CD4-positive, alpha-beta T cell (primary cell): ENCODE measurements at regions of chr15 and their contacts with region 1.

Region 1: DNA sequence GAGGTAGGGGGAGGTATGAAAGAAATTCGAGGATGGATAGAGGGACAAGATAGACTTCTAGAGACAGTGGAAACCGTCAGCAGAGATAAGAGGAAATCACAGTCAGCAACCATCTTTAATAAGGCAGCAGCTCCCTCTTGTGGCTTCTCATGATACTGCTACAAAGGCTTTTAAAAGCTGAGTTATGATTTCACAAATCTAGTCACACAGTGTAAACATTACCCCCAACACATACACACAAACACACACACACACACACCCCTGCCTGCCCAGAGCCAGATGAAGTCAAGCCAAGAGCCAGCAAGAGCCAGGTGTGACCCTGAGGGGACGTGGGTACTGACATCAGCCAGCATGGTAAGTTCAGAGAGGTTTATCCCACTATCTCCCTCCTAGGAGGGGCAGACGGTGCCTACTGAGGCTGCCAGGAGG is 18.9 kb upstream of the TGM5 start:
- DNase-seq: peak in 13 of 14 experiments; percentile 24 to 80 (median 47)
- ATAC-seq: peak; percentile 77
- H3K4me3 ChIP-seq: no peak overlapping the region
- H3K4me3 Mint-ChIP-seq: no peak overlapping the region
- H3K27ac ChIP-seq: no peak overlapping the region
- H3K27ac Mint-ChIP-seq: no peak overlapping the region
- H3K4me1 ChIP-seq: no peaks in the 10 kb centered on the region
- H3K4me1 Mint-ChIP-seq: peaks cover 4% of the 10 kb centered on the region
- H3K27me3 ChIP-seq: no peaks in the 10 kb centered on the region
- H3K27me3 Mint-ChIP-seq: peaks cover 15% of the 10 kb centered on the region
- CTCF ChIP-seq: peak; percentile 74

Region 2: GRCh38 chr15:43225201-43225949 is 60.2 kb before region 1 on chr15:
- CTCF ChIA-PET with region 1: interaction called, 28 read pairs
- POLR2A ChIA-PET with region 1: interaction called, 3 read pairs
- intact Hi-C with region 1: loop called (anchors 1 kb)
- DNase-seq: peak in 12 of 14 experiments; percentile 5 to 76 (median 24)
- ATAC-seq: peak; percentile 79
- H3K4me3 ChIP-seq: no peak overlapping the region
- H3K4me3 Mint-ChIP-seq: no peak overlapping the region
- H3K27ac ChIP-seq: no peak overlapping the region
- H3K27ac Mint-ChIP-seq: no peak overlapping the region
- H3K4me1 ChIP-seq: peaks cover 3% of the 10 kb centered on the region
- H3K4me1 Mint-ChIP-seq: peaks cover 6% of the 10 kb centered on the region
- H3K27me3 ChIP-seq: no peaks in the 10 kb centered on the region
- H3K27me3 Mint-ChIP-seq: peaks cover 13% of the 10 kb centered on the region
- CTCF ChIP-seq: peak; percentile 77